ENCODE measurements at regions of chr1 and their contacts with region 1.

Region 1: GRCh38 chr1:8727809-8728213 is 89.6 kb downstream of the RERE start:
- H3K4me3 ChIP-seq: no peak overlapping the region
- H3K27ac ChIP-seq: no peak overlapping the region
- H3K4me1 ChIP-seq: peaks cover 7% of the 10 kb centered on the region
- CTCF ChIP-seq: no peak

Region 2: DNA sequence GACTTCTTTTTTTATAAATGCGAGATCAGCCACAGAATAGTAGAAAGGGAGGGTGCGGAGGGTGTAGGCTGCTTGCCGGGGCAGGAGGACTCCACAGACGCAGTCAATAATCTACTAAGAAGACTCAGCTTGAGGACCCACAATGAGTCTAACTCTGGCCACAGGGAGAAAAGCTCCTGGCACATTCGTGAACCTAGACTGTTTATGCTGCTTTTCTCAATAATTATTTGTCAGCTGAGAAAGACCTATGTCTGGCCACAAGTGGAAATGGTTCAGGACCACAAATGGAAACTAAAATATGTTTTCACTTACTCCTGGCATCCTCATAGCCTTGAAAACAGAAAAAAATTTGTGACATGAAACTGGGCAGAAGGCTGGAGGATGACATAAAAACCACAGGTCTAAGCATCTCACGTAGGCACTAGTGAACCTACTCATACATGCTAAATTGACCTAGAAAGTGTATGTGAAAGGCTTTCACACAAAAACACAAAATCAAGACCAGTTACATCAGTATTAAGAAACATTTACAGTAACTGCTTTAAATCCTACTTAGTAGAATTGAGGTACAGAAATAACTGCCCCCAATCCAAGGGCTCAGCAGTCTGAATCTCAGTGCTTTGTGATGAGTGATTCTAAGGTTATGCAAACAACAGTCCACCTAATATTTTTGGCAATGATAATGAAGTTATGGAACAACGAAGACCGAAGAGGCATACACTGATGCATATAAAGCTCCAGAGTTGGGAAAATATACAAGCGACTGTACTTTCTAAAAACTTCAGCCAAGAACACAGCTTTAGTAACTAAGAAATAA is 250.4 kb before region 1 on chr1:
- CTCF ChIA-PET with region 1: no interaction called
- POLR2A ChIA-PET with region 1: no interaction called
- H3K4me3 ChIP-seq: no peak overlapping the region
- H3K27ac ChIP-seq: no peak overlapping the region
- H3K4me1 ChIP-seq: peaks cover 20% of the 10 kb centered on the region
- CTCF ChIP-seq: no peak

Region 3: DNA sequence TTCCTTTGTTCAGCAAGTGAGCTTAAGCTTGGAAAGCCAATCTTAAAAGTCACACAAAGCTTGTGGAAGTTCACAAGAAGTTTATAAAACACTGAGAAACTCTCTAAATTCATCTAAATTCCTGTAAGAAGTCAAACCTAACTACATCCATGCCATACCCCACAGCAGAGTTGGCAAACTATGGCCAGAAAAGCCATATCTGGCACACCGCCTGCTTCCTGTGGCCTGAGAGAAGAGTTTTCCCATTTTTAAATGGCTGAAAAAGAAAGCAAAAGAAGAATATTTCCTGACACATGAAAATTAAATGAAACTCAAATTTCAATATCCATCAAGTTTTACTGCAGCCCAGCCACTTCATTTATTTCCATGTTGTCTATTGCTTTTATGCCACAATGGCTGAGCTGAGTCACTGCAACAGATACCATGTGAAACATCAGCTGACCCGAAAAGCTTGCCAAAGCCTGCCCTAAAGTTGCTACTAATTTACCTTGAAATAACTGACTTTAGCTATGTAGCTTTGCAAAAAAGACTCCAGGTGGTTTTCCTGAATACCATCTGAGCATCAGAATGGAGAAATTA is 172.8 kb before region 1 on chr1:
- CTCF ChIA-PET with region 1: interaction called, 13 read pairs
- POLR2A ChIA-PET with region 1: no interaction called
- H3K4me3 ChIP-seq: no peak overlapping the region
- H3K27ac ChIP-seq: no peak overlapping the region
- H3K4me1 ChIP-seq: no peaks in the 10 kb centered on the region; the same call in 1 of the 2 replicates
- CTCF ChIP-seq: no peak

Region 4: GRCh38 chr1:8571200-8571984 is 156.4 kb before region 1 on chr1:
- CTCF ChIA-PET with region 1: interaction called, 12 read pairs
- POLR2A ChIA-PET with region 1: no interaction called
- H3K4me3 ChIP-seq: no peak overlapping the region
- H3K27ac ChIP-seq: no peak overlapping the region
- H3K4me1 ChIP-seq: peaks cover 17% of the 10 kb centered on the region
- CTCF ChIP-seq: no peak

Region 5: DNA sequence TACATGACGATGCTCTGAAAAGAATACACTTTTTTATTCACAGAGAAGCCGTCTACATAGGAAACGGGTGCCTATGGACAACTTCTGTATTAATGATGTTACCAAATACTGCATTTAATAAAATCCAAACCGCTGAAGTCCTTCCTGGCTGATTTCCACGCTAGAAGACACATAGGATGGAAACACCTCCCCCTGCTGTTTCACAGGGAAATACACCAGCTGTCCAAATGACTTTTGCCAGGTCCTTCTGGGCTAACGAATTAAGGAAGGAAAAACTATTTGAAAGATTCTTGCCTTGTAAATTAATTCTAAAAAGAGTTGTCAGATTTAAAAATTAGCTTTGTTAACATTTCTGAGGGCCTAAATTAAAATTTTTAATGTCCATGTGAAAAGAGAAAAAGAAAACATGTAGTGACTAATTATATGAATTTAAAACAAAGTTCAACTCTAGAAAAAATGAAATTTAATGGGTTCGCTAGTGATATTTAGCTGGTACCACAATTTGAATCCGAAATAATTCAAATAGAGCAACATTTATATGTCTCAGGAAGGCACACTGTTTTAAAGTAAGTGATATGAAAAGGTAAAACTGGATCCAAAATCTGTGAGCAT is 56.4 kb before region 1 on chr1:
- CTCF ChIA-PET with region 1: interaction called, 56 read pairs
- POLR2A ChIA-PET with region 1: no interaction called
- H3K4me3 ChIP-seq: no peak overlapping the region
- H3K27ac ChIP-seq: no peak overlapping the region
- H3K4me1 ChIP-seq: peaks cover 35% of the 10 kb centered on the region
- CTCF ChIP-seq: peak; percentile 51; the same call in 1 of the 2 replicates

Region 6: DNA sequence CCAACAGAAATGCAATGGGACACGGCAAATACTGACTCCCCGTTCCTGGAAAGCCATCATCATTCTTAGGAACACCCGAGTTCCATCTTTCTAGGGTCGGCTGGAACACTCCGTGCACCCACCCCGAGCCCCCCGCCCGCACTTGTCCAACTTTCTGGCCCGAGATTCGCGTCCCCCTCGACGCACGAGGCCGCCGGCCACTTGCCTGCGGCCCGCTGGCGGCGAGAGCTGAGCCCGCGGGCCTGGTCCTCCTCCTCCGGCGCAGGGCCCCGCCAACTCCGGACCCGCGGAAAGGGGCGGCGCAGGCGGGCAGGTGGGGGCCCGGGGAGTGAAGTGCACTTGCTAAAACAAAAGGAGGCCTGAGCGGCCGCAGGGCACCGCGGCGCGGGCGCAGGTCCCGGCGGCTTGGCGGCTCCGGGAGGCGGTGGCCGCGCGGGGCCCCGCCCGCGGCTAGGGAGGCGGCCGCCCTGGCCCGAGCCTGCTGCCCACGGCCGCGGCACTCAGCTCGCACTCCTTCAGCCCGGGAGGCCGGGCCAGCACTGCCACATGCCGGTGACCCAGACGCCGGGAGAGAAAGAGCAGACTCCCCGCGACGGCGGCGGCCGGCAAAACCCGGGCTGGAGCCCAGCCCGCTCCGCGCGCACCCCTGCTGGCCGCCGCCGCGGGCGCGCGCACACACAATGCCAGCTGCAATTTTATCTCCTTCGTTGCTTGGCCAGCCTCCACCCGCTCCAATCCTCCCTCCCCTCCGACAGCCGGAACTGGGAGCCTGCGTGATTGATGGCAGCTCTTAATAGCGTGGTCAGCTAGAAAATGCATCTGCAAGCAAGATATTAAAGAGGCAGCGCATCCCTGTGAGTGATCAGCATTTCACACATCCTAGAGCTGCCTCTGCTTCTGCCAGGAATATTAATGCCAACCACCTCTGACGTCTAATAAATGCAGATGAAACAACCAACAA is 24.7 kb before region 1 on chr1:
- CTCF ChIA-PET with region 1: interaction called, 15 read pairs
- POLR2A ChIA-PET with region 1: interaction called, 3 read pairs
- H3K4me3 ChIP-seq: peak overlapping the region; percentile 65
- H3K27ac ChIP-seq: peak overlapping the region; percentile 91
- H3K4me1 ChIP-seq: peaks cover 34% of the 10 kb centered on the region
- CTCF ChIP-seq: no peak